ENCODE measurements at regions of chr4 and their contacts with region 1.

Region 1: DNA sequence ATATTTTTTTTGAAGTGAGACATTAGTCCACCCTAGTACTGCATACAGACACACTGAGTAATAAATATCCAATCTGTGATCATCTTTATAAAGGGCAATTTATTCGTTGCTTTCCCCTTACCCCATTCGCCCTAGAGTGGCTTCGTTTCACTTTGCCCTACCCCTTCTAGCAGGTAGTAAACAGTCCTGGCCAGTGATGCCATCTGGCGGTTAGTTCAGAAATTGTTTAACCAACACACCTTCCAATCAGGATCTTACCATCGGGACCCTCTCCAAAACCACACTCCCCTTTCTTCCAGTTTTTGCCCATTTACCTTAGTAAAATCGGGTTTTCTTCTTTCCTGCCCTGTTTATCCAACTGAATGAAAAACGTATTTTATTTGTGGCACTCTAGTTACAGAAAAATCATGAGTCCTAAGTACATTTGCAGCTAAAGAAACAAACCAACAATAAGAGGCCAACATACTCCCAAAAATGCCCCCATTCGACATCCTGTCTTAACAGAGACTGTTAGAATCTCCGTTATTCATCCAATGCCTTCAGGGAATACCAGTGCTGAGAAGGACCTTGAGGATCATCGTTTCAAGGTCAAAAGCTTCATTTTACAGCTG is 2.2 kb downstream of the PPA2 start:
- DNase-seq: peak; percentile 93
- H3K4me3 ChIP-seq: peak overlapping the region; percentile 86 to 97 (median 94)
- H3K27ac ChIP-seq: peak overlapping the region; percentile 99 to 100 (median 100)
- H3K4me1 ChIP-seq: peaks cover 28 to 61% (median 44%) of the 10 kb centered on the region in 4 donors
- H3K27me3 ChIP-seq: no peaks in the 10 kb centered on the region
- CTCF ChIP-seq: peak; percentile 56 to 80 (median 69)
- EP300 ChIP-seq: no peak
- POLR2A ChIP-seq: no peak

Region 2: DNA sequence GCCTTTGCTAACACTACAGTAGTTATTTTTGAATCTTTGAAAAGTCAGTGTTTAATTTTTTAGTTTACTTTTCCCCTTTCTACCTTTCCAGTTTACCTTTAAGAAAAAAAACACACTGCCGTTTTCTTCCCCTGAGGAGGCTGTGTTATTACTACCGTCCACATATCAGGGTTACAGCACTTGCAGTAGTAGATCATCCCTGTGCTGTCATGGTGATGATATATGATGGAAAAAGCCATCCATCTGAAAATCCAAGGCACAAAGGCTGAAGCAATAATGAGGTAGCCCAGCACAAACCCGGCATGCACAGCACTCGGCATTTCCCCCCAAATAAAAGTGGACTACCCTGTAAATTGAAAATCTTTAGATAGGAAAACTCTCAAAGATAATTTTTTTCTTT is 1235.7 kb before region 1 on chr4:
- intact Hi-C with region 1: no loop called
- DNase-seq: no peak
- H3K4me3 ChIP-seq: no peak overlapping the region
- H3K27ac ChIP-seq: no peak overlapping the region
- H3K4me1 ChIP-seq: peaks cover 0 to 16% (median 3%) of the 10 kb centered on the region in 4 donors
- H3K27me3 ChIP-seq: no peaks in the 10 kb centered on the region
- CTCF ChIP-seq: no peak
- EP300 ChIP-seq: no peak
- POLR2A ChIP-seq: no peak

Region 3: GRCh38 chr4:105140684-105141490 is 330.8 kb before region 1 on chr4:
- intact Hi-C with region 1: loop called (anchors 2 kb)
- DNase-seq: no peak
- H3K4me3 ChIP-seq: no peak overlapping the region
- H3K27ac ChIP-seq: no peak overlapping the region
- H3K4me1 ChIP-seq: peaks cover 0 to 6% (median 2%) of the 10 kb centered on the region in 4 donors
- H3K27me3 ChIP-seq: no peaks in the 10 kb centered on the region
- CTCF ChIP-seq: peak; percentile 56 to 74 (median 66)
- EP300 ChIP-seq: no peak
- POLR2A ChIP-seq: no peak

Region 4: DNA sequence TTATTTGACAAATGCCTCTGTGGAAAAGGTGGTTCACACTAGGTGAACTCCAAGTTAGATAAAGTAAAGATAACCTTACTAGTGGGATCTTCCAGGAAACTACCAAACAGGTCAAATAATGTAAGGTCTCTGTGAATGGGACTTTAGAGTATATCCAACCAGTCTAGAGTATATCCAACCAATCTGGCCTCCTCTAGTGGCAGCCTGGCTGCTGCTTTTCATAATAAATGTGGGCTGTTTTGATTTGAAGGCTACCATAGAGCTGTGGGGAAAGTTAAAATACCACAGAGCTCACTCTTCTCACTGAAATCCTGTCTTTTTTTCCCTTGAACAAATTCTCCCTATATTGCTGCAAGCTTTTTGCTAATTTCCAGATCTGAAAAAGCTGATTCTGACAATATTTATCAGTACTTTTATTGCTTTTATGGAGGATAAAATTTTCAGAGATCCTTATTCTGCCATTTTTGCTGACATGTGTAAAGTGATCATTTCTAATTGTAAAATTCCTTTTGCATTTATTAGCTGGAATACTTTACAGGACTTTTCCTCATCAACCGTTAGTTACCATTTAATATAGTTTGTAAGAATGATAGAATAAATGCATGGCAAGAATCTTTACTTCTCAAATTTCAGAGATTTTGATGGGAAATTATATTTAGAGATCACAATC is 213.7 kb before region 1 on chr4:
- intact Hi-C with region 1: loop called (anchors 5 kb)
- DNase-seq: no peak
- H3K4me3 ChIP-seq: no peak overlapping the region
- H3K27ac ChIP-seq: no peak overlapping the region
- H3K4me1 ChIP-seq: no peaks in the 10 kb centered on the region
- H3K27me3 ChIP-seq: no peaks in the 10 kb centered on the region
- CTCF ChIP-seq: no peak
- EP300 ChIP-seq: no peak
- POLR2A ChIP-seq: no peak

Region 5: GRCh38 chr4:105657117-105657765 is 185.6 kb after region 1 on chr4:
- intact Hi-C with region 1: no loop called
- DNase-seq: no peak
- H3K4me3 ChIP-seq: no peak overlapping the region
- H3K27ac ChIP-seq: no peak overlapping the region
- H3K4me1 ChIP-seq: peaks cover 0 to 6% (median 3%) of the 10 kb centered on the region in 4 donors
- H3K27me3 ChIP-seq: no peaks in the 10 kb centered on the region
- CTCF ChIP-seq: no peak
- EP300 ChIP-seq: no peak
- POLR2A ChIP-seq: no peak

Region 6: DNA sequence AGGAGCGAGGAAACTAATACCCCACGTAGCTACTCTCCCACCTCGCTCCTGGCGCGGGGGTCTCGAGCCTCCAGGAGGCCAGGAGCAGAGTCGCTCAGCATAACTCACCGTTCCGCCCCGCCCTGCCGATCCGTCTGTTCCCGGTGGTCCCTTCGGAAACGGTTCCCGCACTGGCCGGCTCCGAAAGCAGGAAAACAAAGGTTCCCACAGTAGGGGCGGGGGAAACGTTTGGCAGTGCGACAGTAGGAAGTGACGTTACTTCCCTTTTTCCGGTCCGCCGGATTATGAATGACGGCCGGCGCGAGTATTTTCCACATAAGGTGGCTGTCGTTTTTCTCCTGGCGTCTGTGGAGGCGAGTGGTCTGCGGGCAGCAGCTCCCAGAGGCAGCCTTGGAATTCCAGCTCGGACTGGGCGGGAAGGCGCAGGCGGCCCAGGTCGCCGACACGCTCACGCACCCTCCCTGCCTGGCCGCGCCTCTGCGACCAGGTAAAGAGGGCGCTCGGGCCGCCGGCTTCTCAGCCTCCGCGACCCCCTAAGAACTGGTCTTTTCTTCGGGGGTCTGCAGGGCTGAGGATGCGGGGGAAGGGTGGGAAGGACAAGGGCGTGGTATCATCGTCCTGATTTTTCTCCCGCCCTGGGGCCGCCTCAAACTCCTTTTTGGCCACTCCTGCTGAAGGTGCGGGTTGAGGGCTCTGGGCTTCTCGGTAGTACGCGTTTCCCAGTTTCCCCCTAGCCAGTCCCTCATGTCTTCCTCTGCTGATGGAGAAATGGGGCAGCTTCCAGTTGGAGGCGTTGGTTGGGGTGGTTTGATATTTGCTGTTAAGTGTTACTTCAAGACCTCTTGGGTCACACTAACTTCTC is 237.1 kb after region 1 on chr4 and contains the starts of genes GSTCD and INTS12:
- intact Hi-C with region 1: loop called (anchors 5 kb)
- DNase-seq: peak; percentile 98
- H3K4me3 ChIP-seq: peak within 1 kb of the TSS; percentile 72 to 92 (median 78)
- H3K27ac ChIP-seq: peak within 1 kb of the TSS; percentile 82 to 96 (median 86)
- H3K4me1 ChIP-seq: peaks cover 16 to 41% (median 31%) of the 10 kb centered on the region in 4 donors
- H3K27me3 ChIP-seq: no peaks in the 10 kb centered on the region
- CTCF ChIP-seq: peak in 1 of 3 experiments; percentile 20
- EP300 ChIP-seq: no peak
- POLR2A ChIP-seq: peak; percentile 58
- total RNA-seq, gene GSTCD: 5.2 to 14.5 (median 8.1) TPM
- total RNA-seq, gene INTS12: 19.1 to 24.5 (median 22.9) TPM